ENCODE measurements at regions of chr9 and their contacts with region 1.

Region 1: GRCh38 chr9:95494416-95495371 is 22.1 kb downstream of the PTCH1 start:
- DNase-seq: peak; percentile 92

Region 2: GRCh38 chr9:95264954-95265615 is 229.6 kb before region 1 on chr9:
- in situ Hi-C with region 1: no loop called
- DNase-seq: peak; percentile 38

Region 3: DNA sequence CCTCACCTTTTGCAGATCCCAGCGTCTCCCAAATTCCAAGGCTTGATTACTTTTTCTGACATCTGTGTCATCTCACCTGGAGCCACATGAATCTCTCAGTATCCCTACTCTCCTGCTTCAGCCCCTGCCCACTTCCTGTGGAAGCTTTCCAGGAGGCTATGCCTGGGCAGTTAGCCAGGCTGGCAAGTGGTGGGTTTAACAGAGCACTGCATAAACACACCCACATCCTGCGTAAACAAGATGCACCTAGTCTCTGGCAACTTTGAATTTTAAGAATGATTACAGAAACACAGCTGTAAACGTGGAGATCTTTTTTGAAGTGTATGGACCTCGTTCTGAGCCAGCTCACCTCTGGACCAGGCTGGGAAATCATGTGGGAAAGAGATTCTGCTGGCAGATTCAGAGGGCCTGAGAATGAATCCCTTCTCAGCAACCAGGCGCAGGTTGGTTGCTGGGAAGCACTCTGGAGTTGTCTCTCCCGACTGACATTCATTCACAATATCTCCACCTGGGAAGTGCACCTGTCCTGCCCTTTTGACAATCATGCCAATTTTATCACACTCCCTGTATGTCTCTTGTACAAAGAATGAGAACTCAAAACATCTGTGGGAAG is 121.5 kb before region 1 on chr9:
- in situ Hi-C with region 1: no loop called
- DNase-seq: no peak

Region 4: DNA sequence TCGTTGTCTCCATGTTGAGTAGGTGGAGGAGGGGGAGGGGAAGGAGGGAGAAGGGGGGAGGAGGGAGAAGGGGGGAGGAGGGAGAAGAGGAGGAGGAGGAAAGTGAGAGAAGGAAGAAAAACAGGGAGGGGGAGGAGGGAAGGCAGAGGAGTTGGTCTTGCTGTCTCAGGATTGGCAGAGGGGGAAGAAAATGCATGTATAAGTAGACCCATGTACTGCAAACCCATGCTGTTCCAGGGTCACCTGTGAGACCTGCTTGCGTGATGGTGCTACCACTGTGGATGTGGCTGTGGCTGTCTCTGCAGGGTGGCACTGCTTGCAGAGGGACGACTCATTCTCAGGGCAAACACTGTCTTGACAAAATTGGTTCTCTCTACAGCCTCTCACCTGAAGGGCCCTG is 54.2 kb before region 1 on chr9:
- in situ Hi-C with region 1: loop called (anchors 5 kb)
- DNase-seq: no peak

Measured in G401 (cell line).